ENCODE measurements at regions of chr4 and their contacts with region 1.

Region 1: GRCh38 chr4:42568610-42569207 is 88.2 kb downstream of the ATP8A1 start:
- DNase-seq: no peak
- H3K4me3 ChIP-seq: no peak overlapping the region
- H3K27ac ChIP-seq: no peak overlapping the region
- H3K4me1 ChIP-seq: peaks cover 6 to 9% (median 9%) of the 10 kb centered on the region in 4 donors
- H3K27me3 ChIP-seq: no peaks in the 10 kb centered on the region
- CTCF ChIP-seq: peak; percentile 65 to 71 (median 69)
- EP300 ChIP-seq: no peak
- POLR2A ChIP-seq: no peak

Region 2: GRCh38 chr4:42750091-42750490 is 181.4 kb after region 1 on chr4:
- intact Hi-C with region 1: loop called (anchors 10 kb)
- DNase-seq: no peak
- H3K4me3 ChIP-seq: no peak overlapping the region
- H3K27ac ChIP-seq: no peak overlapping the region
- H3K4me1 ChIP-seq: no peaks in the 10 kb centered on the region
- H3K27me3 ChIP-seq: no peaks in the 10 kb centered on the region
- CTCF ChIP-seq: peak in 1 of 3 experiments; percentile 14
- EP300 ChIP-seq: no peak
- POLR2A ChIP-seq: no peak

Region 3: DNA sequence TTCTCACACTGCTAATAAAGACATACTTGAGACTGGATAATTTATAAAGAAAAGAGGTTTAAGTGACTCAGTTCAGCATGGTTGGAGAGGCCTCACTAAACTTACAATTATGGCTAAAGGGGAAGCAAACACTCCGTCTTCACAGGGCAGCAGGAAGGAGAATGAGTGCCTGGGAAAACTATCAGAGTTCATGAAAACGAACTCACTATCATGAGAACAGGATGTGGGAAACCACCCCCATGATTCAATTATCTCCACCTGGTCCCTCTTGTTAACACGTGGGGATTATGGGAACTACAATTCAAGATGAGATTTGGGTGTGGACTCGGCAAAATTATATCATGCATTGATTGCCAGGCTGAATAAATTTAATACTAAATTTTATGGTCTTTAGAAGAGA is 916.5 kb after region 1 on chr4:
- intact Hi-C with region 1: no loop called
- DNase-seq: no peak
- H3K4me3 ChIP-seq: no peak overlapping the region
- H3K27ac ChIP-seq: no peak overlapping the region
- H3K4me1 ChIP-seq: no peaks in the 10 kb centered on the region
- H3K27me3 ChIP-seq: no peaks in the 10 kb centered on the region
- CTCF ChIP-seq: no peak
- EP300 ChIP-seq: no peak
- POLR2A ChIP-seq: no peak